Cardiac septum (tissue), 1 donor: ENCODE measurements at regions of chr19 and their contacts with region 1.

Region 1: DNA sequence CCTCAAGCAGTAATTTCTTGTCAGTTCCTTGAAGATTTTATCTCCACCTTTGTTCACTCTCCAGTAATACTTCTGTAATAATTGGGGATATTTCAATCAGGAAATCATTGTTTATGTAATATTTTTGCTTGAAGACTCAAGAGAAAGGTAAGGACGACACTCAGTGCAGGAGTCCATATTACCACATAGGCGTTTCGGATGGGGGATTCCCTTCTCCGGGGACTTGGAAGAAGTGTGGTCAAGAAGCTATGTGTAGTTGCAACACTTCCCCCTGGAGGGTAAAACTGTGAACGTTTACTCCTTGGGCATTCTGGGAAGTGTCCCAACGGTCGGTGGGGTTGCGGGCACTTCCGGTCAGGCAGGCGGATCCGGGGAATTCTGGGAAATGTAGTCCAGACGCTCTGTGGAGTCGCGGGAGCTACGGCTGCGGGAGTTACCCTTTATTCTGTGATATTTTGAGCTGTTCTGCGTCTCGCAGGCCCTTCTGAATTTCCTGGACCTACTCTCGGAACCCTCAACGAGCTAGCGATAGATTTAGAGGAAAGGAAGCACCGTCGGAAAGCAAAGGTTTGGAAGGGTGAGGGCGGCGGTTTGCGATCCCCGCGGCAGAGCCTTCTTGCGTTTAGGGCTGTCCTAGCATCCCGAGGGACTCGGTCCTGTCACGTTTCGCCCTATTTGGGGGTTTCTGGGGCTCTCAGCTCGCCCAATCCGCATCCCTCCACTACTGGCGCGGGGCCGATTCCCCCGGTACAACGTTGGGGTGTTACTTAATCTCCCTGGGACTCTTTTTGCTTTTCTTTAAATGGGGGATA is at the start of gene ZNF221:
- DNase-seq: peak; percentile 92
- total RNA-seq, gene ZNF221: 4.7 TPM

Region 2: GRCh38 chr19:43826787-43827754 is 124.0 kb before region 1 on chr19 and contains the start of gene ZNF283:
- intact Hi-C with region 1: loop called (anchors 1 kb)
- DNase-seq: peak; percentile 95
- total RNA-seq, gene ZNF283: 15.2 TPM

Region 3: DNA sequence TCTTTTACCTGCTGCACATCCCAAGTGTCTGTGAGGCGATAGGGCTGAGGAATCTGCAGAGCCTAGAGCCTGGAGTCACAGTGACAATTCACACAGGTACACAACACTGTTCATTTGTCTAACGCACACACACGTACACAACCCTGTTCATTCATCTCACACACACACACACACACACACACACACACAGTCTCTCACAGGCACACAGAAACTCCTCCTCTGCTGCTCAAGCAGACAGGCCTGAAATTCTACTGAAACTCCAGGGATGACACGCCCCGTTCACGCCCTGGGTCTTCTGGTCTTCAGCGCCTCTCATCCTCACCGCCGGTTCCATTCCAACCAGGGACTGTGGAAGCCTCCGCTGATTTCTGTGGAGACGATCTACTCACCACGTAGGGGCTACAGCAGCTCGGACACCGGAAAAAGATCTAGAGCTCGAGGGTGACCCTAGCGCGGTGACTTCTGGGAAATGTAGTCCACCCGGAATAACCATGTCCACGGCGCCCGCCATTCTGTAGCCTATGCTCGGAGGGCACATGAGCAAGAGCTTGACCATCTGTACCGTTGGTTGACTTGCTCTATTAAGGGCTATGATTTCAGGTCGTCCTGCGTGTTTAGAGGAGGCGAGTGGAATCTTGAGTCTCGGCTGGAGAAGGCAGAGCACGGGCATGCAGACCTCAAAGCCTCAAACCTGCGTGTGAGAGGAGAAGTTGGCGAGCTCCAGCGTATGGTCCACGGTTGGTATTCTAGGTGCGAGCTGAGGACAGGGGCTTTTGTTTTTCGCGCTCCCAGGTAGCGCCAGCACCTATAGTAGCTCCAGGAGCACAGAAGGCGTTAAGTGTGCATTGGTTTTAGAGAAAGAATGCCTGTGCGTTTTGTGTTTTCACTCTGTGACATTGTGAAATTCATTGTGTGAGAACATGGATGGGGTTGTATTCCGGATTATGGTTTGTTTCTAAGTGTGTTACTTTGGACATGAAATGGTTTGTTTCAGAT is 49.3 kb before region 1 on chr19:
- intact Hi-C with region 1: loop called (anchors 5 kb)
- DNase-seq: peak; percentile 93

Region 4: GRCh38 chr19:43934985-43935708 is 15.9 kb before region 1 on chr19 and contains the start of gene ZNF45:
- intact Hi-C with region 1: loop called (anchors 1 kb)
- DNase-seq: peak; percentile 96
- total RNA-seq, gene ZNF45: 7.0 TPM